Sigmoid colon (tissue), 7 donors: ENCODE measurements at regions of chr11 and their contacts with region 1.

Region 1: GRCh38 chr11:30586251-30587144 is at the start of gene MPPED2:
- DNase-seq: peak; percentile 77
- H3K4me3 ChIP-seq: peak within 1 kb of the TSS; percentile 52 to 89 (median 86)
- H3K27ac ChIP-seq: peak within 1 kb of the TSS; percentile 85 to 97 (median 90)
- H3K4me1 ChIP-seq: peaks cover 0 to 32% (median 9%) of the 10 kb centered on the region in 4 donors
- H3K27me3 ChIP-seq: no peaks in the 10 kb centered on the region
- CTCF ChIP-seq: peak; percentile 45 to 79 (median 53)
- EP300 ChIP-seq: no peak
- POLR2A ChIP-seq: no peak
- total RNA-seq, gene MPPED2: 6.4 to 19.1 (median 9.8) TPM

Region 2: GRCh38 chr11:30322826-30323710 is 263.4 kb before region 1 on chr11 and contains the start of gene ARL14EP:
- intact Hi-C with region 1: loop called (anchors 5 kb)
- DNase-seq: peak; percentile 95
- H3K4me3 ChIP-seq: peak within 1 kb of the TSS; percentile 66 to 75 (median 72)
- H3K27ac ChIP-seq: peak within 1 kb of the TSS; percentile 82 to 89 (median 86)
- H3K4me1 ChIP-seq: peaks cover 0 to 36% (median 29%) of the 10 kb centered on the region in 4 donors
- H3K27me3 ChIP-seq: no peaks in the 10 kb centered on the region
- CTCF ChIP-seq: no peak
- EP300 ChIP-seq: no peak
- POLR2A ChIP-seq: peak; percentile 85 to 87
- total RNA-seq, gene ARL14EP: 22.5 to 34.2 (median 30.9) TPM

Region 3: DNA sequence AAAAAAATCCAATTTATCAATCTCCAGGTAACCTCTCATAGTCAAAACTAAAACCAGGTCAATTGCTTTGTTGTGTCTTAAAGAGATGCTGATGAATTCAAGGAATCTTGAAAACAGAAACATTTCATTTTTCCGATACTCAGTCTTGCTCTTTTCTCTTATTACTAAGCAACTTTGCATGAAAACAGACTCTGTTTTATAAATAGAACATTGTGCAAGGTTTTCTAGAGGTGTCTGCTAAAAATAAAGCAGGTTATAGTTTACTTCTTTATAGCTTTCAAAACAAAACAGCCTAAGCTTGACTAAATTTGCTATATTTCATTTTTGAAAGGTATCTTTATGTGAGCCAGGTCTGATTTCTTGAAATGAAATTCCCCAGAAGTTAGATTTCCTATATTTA is 154.3 kb before region 1 on chr11:
- intact Hi-C with region 1: loop called (anchors 5 kb)
- DNase-seq: no peak
- H3K4me3 ChIP-seq: no peak overlapping the region
- H3K27ac ChIP-seq: peak overlapping the region in 2 of 4 donors; percentile 39 to 60
- H3K4me1 ChIP-seq: peaks cover 0 to 43% (median 37%) of the 10 kb centered on the region in 4 donors
- H3K27me3 ChIP-seq: no peaks in the 10 kb centered on the region
- CTCF ChIP-seq: no peak
- EP300 ChIP-seq: no peak
- POLR2A ChIP-seq: no peak

Region 4: GRCh38 chr11:30478923-30479322 is 107.6 kb before region 1 on chr11:
- intact Hi-C with region 1: loop called (anchors 2 kb)
- DNase-seq: peak; percentile 71
- H3K4me3 ChIP-seq: no peak overlapping the region
- H3K27ac ChIP-seq: peak overlapping the region in 3 of 4 donors; percentile 65 to 73 (median 73)
- H3K4me1 ChIP-seq: peaks cover 0 to 48% (median 43%) of the 10 kb centered on the region in 4 donors
- H3K27me3 ChIP-seq: no peaks in the 10 kb centered on the region
- CTCF ChIP-seq: no peak
- EP300 ChIP-seq: no peak
- POLR2A ChIP-seq: no peak